MCF 10A (cell line): ENCODE measurements at regions of chr3 and their contacts with region 1.

Region 1: GRCh38 chr3:184362668-184363540 is 1.4 kb downstream of the POLR2H start:
- DNase-seq: peak; percentile 98
- H3K4me3 Mint-ChIP-seq: peak overlapping the region; percentile 93
- H3K27ac Mint-ChIP-seq: peak overlapping the region; percentile 89
- H3K4me1 Mint-ChIP-seq: peaks cover 27% of the 10 kb centered on the region
- H3K27me3 Mint-ChIP-seq: no peaks in the 10 kb centered on the region
- CTCF ChIP-seq: peak; percentile 45

Region 2: DNA sequence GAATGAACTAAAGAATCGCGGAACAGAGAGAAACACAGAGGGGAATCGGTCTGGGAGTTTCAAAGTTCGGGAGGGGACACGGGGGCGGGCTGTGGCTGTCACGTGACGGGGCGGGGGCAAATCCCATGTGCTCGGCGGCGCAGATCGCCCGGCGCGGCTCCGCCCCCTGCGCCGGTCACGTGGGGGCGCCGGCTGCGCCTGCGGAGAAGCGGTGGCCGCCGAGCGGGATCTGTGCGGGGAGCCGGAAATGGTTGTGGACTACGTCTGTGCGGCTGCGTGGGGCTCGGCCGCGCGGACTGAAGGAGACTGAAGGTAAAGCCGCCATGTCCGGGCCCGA is 48.6 kb before region 1 on chr3 and contains the start of gene EIF4G1:
- CTCF ChIA-PET with region 1: no interaction called
- POLR2A ChIA-PET with region 1: interaction called, 18 read pairs
- intact Hi-C with region 1: loop called (anchors 2 kb)
- DNase-seq: peak; percentile 89
- H3K4me3 Mint-ChIP-seq: peak within 1 kb of the TSS; percentile 87
- H3K27ac Mint-ChIP-seq: peak within 1 kb of the TSS; percentile 88
- H3K4me1 Mint-ChIP-seq: peaks cover 27% of the 10 kb centered on the region
- H3K27me3 Mint-ChIP-seq: no peaks in the 10 kb centered on the region
- CTCF ChIP-seq: no peak
- total RNA-seq, gene EIF4G1: 522 and 536 TPM in 2 replicates

Region 3: GRCh38 chr3:184441202-184441900 is 78.4 kb after region 1 on chr3:
- CTCF ChIA-PET with region 1: no interaction called
- POLR2A ChIA-PET with region 1: no interaction called
- intact Hi-C with region 1: no loop called
- DNase-seq: no peak
- H3K4me3 Mint-ChIP-seq: no peak overlapping the region
- H3K27ac Mint-ChIP-seq: no peak overlapping the region
- H3K4me1 Mint-ChIP-seq: peaks cover 9% of the 10 kb centered on the region
- H3K27me3 Mint-ChIP-seq: peaks cover 26% of the 10 kb centered on the region
- CTCF ChIP-seq: no peak